Activated B cell treated with CpG ODN at 0.5 μM for 24 hours (primary cell): ENCODE measurements at regions of chr14 and their contacts with region 1.

Region 1: GRCh38 chr14:56339855-56340701 is 221.9 kb downstream of the PELI2 start:
- DNase-seq: peak; percentile 20
- ATAC-seq: peak; percentile 56
- H3K4me3 Mint-ChIP-seq: peak overlapping the region; percentile 29
- H3K27ac Mint-ChIP-seq: no peak overlapping the region
- H3K4me1 Mint-ChIP-seq: peaks cover 11% of the 10 kb centered on the region
- H3K27me3 Mint-ChIP-seq: no peaks in the 10 kb centered on the region
- CTCF ChIP-seq: peak; percentile 21

Region 2: GRCh38 chr14:55212634-55213033 is 1127.4 kb before region 1 on chr14:
- CTCF ChIA-PET with region 1: no interaction called
- POLR2A ChIA-PET with region 1: no interaction called
- intact Hi-C with region 1: loop called (anchors 5 kb)
- DNase-seq: no peak
- ATAC-seq: no peak
- H3K4me3 Mint-ChIP-seq: no peak overlapping the region
- H3K27ac Mint-ChIP-seq: no peak overlapping the region
- H3K4me1 Mint-ChIP-seq: peaks cover 2% of the 10 kb centered on the region
- H3K27me3 Mint-ChIP-seq: no peaks in the 10 kb centered on the region
- CTCF ChIP-seq: no peak

Region 3: DNA sequence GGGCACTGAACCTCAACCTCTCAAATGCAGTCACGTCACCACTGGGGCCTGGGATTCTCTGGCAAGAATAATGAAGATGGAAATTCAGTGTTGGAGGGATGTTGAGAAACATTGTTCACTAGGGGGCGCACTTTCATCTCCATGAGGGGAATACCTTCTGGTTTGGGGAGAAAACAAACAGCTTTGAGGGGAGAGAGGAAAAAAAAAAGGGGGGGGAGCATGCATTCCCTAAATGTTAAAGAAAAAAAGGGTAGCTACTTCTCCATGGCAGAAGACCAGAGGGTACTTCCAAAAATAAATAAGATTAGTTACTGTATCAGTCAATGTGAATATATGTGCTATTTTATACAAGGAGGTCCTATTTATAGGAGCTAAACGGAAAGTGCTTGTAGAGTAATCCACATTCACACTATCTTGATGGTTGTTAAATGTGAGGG is 893.8 kb before region 1 on chr14:
- CTCF ChIA-PET with region 1: interaction called, 8 read pairs
- POLR2A ChIA-PET with region 1: no interaction called
- intact Hi-C with region 1: loop called (anchors 1 kb)
- DNase-seq: no peak
- ATAC-seq: no peak
- H3K4me3 Mint-ChIP-seq: no peak overlapping the region
- H3K27ac Mint-ChIP-seq: no peak overlapping the region
- H3K4me1 Mint-ChIP-seq: no peaks in the 10 kb centered on the region
- H3K27me3 Mint-ChIP-seq: no peaks in the 10 kb centered on the region
- CTCF ChIP-seq: peak; percentile 37

Region 4: GRCh38 chr14:55731881-55732498 is 608.1 kb before region 1 on chr14:
- CTCF ChIA-PET with region 1: interaction called, 16 read pairs
- POLR2A ChIA-PET with region 1: no interaction called
- intact Hi-C with region 1: loop called (anchors 1 kb)
- DNase-seq: no peak
- ATAC-seq: no peak
- H3K4me3 Mint-ChIP-seq: no peak overlapping the region
- H3K27ac Mint-ChIP-seq: no peak overlapping the region
- H3K4me1 Mint-ChIP-seq: no peaks in the 10 kb centered on the region
- H3K27me3 Mint-ChIP-seq: no peaks in the 10 kb centered on the region
- CTCF ChIP-seq: no peak

Region 5: GRCh38 chr14:55864890-55865655 is 475.0 kb before region 1 on chr14:
- CTCF ChIA-PET with region 1: interaction called, 3 read pairs
- POLR2A ChIA-PET with region 1: no interaction called
- intact Hi-C with region 1: loop called (anchors 1 kb)
- DNase-seq: no peak
- ATAC-seq: no peak
- H3K4me3 Mint-ChIP-seq: no peak overlapping the region
- H3K27ac Mint-ChIP-seq: no peak overlapping the region
- H3K4me1 Mint-ChIP-seq: peaks cover 18% of the 10 kb centered on the region
- H3K27me3 Mint-ChIP-seq: peaks cover 10% of the 10 kb centered on the region
- CTCF ChIP-seq: no peak